ENCODE measurements at regions of chr14 and their contacts with region 1.

Region 1: DNA sequence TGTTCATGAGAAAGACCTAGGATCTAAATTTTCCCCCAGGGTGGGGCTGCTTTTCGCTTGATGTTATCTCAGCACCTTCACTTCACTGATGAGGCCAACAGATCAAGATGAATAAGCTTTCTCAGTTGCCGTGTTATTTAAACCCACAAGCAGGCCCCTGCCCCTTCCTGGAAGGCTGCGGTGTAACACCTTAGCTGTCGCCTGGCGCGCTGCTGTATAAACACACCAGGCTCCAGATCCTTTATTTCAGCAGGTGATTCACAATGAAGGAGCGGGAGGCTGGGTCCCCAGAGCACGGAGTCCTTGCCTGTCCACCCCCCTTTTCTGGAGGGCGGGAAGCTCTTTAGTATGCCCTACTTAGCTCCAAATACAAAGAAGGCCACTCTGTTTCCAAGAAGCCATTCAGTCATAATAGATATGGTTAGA is 515.4 kb downstream of the FUT8 start:
- DNase-seq: peak; percentile 66 to 78 (median 73)
- H3K4me3 ChIP-seq: peak overlapping the region in 1 of 2 donors; percentile 22
- H3K4me3 Mint-ChIP-seq: peak overlapping the region; percentile 45 to 81 (median 73)
- H3K27ac ChIP-seq: peak overlapping the region; percentile 42
- H3K27ac Mint-ChIP-seq: peak overlapping the region; percentile 81 to 96 (median 92)
- H3K4me1 ChIP-seq: peaks cover 55% of the 10 kb centered on the region
- H3K4me1 Mint-ChIP-seq: peaks cover 52 to 72% (median 64%) of the 10 kb centered on the region in 4 donors
- H3K27me3 ChIP-seq: no peaks in the 10 kb centered on the region
- H3K27me3 Mint-ChIP-seq: no peaks in the 10 kb centered on the region

Region 2: GRCh38 chr14:65783576-65783975 is 144.4 kb before region 1 on chr14:
- CTCF ChIA-PET with region 1: no interaction called
- POLR2A ChIA-PET with region 1: no interaction called
- intact Hi-C with region 1: no loop called
- DNase-seq: no peak
- H3K4me3 ChIP-seq: no peak overlapping the region
- H3K4me3 Mint-ChIP-seq: no peak overlapping the region
- H3K27ac ChIP-seq: no peak overlapping the region
- H3K27ac Mint-ChIP-seq: peak overlapping the region in 1 of 7 donors; percentile 31
- H3K4me1 ChIP-seq: no peaks in the 10 kb centered on the region
- H3K4me1 Mint-ChIP-seq: no peaks in the 10 kb centered on the region
- H3K27me3 ChIP-seq: no peaks in the 10 kb centered on the region
- H3K27me3 Mint-ChIP-seq: no peaks in the 10 kb centered on the region

Region 3: DNA sequence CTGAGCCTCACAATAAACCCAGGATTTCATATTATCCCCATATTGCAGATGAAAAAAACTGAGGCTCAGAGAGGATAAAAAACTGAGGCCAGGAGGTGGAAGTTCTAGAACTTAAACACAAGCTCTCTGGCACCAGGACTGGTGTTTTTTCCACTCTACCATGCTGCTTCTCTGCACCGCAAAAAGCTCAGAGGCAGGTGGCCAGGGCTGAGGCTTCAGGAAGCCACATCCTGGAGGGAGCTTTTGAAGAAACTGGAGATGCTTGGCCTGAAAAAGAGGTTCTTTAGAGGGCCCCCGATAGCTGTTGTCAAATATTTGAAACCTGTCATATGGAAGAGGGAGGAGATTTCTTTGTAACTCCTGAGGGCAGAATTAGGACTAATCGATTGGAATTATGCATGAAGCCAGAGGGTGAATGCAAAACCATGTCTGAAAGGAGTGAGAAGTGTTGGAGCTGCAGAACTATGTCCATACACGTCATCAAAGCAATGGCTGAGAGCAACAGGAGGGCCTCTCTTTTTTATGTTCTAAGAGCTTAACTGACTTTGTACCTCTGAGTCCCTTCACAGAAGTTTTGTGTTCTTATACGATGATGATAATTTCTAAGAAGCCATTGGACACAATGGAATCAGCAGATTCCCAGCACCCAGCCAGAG is 66.9 kb before region 1 on chr14:
- CTCF ChIA-PET with region 1: interaction called, 5 read pairs
- POLR2A ChIA-PET with region 1: interaction called, 28 read pairs
- intact Hi-C with region 1: no loop called
- DNase-seq: peak in 4 of 5 donors; percentile 31 to 51 (median 38)
- H3K4me3 ChIP-seq: no peak overlapping the region
- H3K4me3 Mint-ChIP-seq: peak overlapping the region in 6 of 8 donors; percentile 0 to 74 (median 58)
- H3K27ac ChIP-seq: no peak overlapping the region
- H3K27ac Mint-ChIP-seq: peak overlapping the region; percentile 0 to 62 (median 14)
- H3K4me1 ChIP-seq: peaks cover 47% of the 10 kb centered on the region
- H3K4me1 Mint-ChIP-seq: peaks cover 45 to 65% (median 52%) of the 10 kb centered on the region in 4 donors
- H3K27me3 ChIP-seq: no peaks in the 10 kb centered on the region
- H3K27me3 Mint-ChIP-seq: no peaks in the 10 kb centered on the region

Region 4: GRCh38 chr14:65940056-65940733 is 12.3 kb after region 1 on chr14:
- CTCF ChIA-PET with region 1: interaction called, 13 read pairs
- POLR2A ChIA-PET with region 1: interaction called, 25 read pairs
- intact Hi-C with region 1: no loop called
- DNase-seq: no peak
- H3K4me3 ChIP-seq: no peak overlapping the region
- H3K4me3 Mint-ChIP-seq: no peak overlapping the region
- H3K27ac ChIP-seq: no peak overlapping the region
- H3K27ac Mint-ChIP-seq: no peak overlapping the region
- H3K4me1 ChIP-seq: peaks cover 58% of the 10 kb centered on the region
- H3K4me1 Mint-ChIP-seq: peaks cover 31 to 65% (median 55%) of the 10 kb centered on the region in 4 donors
- H3K27me3 ChIP-seq: no peaks in the 10 kb centered on the region
- H3K27me3 Mint-ChIP-seq: no peaks in the 10 kb centered on the region

Region 5: DNA sequence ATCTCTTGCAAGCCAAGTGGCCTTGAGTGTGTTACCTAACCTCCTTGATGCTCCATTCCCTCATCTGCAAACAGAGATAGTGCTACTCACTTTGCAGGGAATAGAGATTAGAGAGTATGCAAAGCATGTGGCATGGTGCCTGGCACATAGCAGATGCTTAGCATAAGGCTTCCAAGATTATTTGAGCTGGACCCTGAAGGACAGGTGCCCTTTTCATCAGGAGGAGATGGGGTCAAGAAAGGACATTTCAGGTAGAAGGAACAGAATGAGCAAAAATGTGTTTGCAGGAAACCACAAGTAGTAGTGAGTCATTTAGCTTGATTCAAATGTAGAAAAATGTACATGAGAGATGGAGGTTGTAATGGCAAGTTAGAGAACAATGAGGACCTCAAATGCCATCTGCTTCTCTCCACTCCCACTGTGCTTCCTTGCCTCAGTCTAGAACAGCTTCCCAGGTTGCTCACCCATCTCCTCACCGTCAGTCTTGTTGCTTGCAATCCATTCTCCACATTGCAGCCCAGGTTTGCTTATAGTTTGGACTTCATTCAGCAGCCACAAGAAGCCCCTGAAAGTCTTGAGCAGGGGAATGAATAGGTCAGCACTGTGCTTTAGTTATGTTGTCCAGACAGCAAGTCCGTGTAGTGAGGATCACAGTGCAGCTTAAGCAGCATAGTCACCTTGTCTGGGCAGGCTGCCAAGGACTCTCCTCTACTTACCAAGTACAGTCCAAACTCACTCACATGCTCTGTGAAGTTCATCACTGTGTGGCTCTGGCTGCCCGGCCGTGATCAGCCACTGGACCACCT is 22.0 kb after region 1 on chr14:
- CTCF ChIA-PET with region 1: interaction called, 8 read pairs
- POLR2A ChIA-PET with region 1: interaction called, 19 read pairs
- intact Hi-C with region 1: no loop called
- DNase-seq: no peak
- H3K4me3 ChIP-seq: no peak overlapping the region
- H3K4me3 Mint-ChIP-seq: peak overlapping the region in 5 of 8 donors; percentile 17 to 67 (median 30)
- H3K27ac ChIP-seq: no peak overlapping the region
- H3K27ac Mint-ChIP-seq: peak overlapping the region in 6 of 7 donors; percentile 3 to 76 (median 64)
- H3K4me1 ChIP-seq: peaks cover 19% of the 10 kb centered on the region
- H3K4me1 Mint-ChIP-seq: peaks cover 17 to 59% (median 27%) of the 10 kb centered on the region in 4 donors
- H3K27me3 ChIP-seq: no peaks in the 10 kb centered on the region
- H3K27me3 Mint-ChIP-seq: no peaks in the 10 kb centered on the region

Region 6: GRCh38 chr14:65972891-65973290 is 44.9 kb after region 1 on chr14:
- CTCF ChIA-PET with region 1: no interaction called
- POLR2A ChIA-PET with region 1: no interaction called
- intact Hi-C with region 1: no loop called
- DNase-seq: no peak
- H3K4me3 ChIP-seq: no peak overlapping the region
- H3K4me3 Mint-ChIP-seq: no peak overlapping the region
- H3K27ac ChIP-seq: no peak overlapping the region
- H3K27ac Mint-ChIP-seq: no peak overlapping the region
- H3K4me1 ChIP-seq: no peaks in the 10 kb centered on the region
- H3K4me1 Mint-ChIP-seq: peaks cover 0 to 1% (median 0%) of the 10 kb centered on the region in 4 donors
- H3K27me3 ChIP-seq: no peaks in the 10 kb centered on the region
- H3K27me3 Mint-ChIP-seq: no peaks in the 10 kb centered on the region